Psoas muscle (tissue), 8 donors: ENCODE measurements at regions of chr16 and their contacts with region 1.

Region 1: DNA sequence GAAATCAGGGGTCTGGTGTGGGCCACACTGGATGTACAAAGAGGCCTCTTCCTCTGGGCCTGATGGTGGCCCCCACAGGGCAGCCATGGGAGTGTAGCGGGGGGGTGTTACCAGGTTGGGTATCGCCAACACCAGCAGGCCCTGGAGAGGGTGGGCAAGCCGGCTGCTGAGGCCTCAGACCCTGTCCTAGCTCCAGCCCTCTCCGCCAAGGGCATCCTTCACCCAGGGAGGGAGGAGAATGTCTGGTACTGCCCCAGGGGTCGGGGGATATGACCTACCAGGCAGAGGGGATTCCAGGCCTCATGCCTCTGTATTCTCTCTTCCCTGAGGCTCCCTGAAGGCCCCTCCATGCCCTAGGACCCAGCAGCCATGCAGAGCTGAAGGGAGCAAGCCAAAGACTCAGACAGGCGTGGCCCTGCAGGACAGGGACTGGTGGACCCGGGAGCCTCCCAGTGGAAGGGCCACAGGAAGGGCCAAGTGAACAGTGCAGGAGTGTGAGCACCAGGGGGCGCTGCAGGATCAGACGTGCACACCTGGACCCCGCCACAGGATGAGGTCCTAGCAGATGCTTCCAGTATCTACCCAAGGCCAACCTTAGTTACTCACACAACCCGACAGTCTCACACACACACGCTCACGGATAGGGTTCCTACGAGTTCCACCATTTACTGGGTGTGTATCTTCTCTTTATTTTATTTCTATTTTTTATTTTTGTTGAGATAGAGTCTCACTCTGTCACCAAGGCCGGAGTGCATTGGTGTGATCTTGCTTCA is 10.9 kb upstream of the CES4A start:
- DNase-seq: peak; percentile 92 to 94
- ATAC-seq: peak; percentile 93 to 98 (median 96)
- H3K4me3 ChIP-seq: no peak overlapping the region
- H3K27ac ChIP-seq: no peak overlapping the region
- H3K4me1 ChIP-seq: no peaks in the 10 kb centered on the region
- H3K27me3 ChIP-seq: no peaks in the 10 kb centered on the region
- CTCF ChIP-seq: peak; percentile 98

Region 2: GRCh38 chr16:67104061-67104460 is 126.5 kb after region 1 on chr16:
- intact Hi-C with region 1: loop called (anchors 2 to 5 kb)
- DNase-seq: no peak
- ATAC-seq: peak in 3 of 4 donors; percentile 60 to 75 (median 63)
- H3K4me3 ChIP-seq: no peak overlapping the region
- H3K27ac ChIP-seq: no peak overlapping the region
- H3K4me1 ChIP-seq: peaks cover 6% of the 10 kb centered on the region
- H3K27me3 ChIP-seq: no peaks in the 10 kb centered on the region
- CTCF ChIP-seq: peak; percentile 32

Region 3: DNA sequence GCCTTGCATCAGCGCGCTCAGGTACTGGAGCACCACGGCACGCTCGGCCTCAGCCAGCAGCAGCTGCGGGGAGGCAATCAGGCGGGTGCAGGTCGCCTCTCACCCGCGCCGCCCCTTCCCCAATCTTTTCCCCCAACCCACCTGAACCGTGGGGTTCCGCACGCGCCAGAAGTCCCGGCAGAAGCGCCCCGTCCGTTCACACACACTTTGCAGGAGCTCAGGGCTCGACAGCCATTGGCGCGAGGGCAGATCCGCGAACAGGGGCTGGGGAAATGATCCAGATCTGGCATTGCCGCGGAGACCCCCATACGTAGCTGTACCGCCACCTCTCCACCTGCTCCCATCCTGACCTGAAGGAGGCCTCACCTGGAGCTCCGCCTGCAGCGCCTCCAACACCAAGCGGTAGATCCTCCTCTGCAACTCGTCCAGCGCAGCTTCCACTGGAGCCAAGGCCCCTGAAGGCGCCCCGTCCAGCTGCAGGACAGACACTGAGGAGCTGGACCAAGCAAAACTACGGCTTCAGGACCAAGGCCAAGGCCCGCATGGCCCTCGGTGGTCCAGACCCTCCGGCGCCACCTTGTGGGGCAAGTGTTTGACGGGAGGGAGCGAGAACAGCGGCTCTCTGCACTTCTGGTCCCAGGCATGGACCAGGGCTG is 207.6 kb after region 1 on chr16:
- intact Hi-C with region 1: loop called in 1 of 2 experiments (anchors 1 kb)
- DNase-seq: peak; percentile 94 to 97
- ATAC-seq: peak; percentile 54 to 70 (median 63)
- H3K4me3 ChIP-seq: peak overlapping the region; percentile 95
- H3K27ac ChIP-seq: no peak overlapping the region
- H3K4me1 ChIP-seq: peaks cover 29% of the 10 kb centered on the region
- H3K27me3 ChIP-seq: no peaks in the 10 kb centered on the region
- CTCF ChIP-seq: peak; percentile 87